ENCODE measurements at regions of chr3 and their contacts with region 1.

Region 1: GRCh38 chr3:17006132-17006852 is 121.5 kb downstream of the PLCL2 start:
- DNase-seq: no peak
- ATAC-seq: no peak
- H3K4me3 ChIP-seq: no peak overlapping the region
- H3K27ac ChIP-seq: no peak overlapping the region
- H3K4me1 ChIP-seq: no peaks in the 10 kb centered on the region
- H3K27me3 ChIP-seq: no peaks in the 10 kb centered on the region
- CTCF ChIP-seq: no peak
- POLR2A ChIP-seq: no peak
- RAD21 ChIP-seq: no peak

Region 2: GRCh38 chr3:16741103-16741758 is 265.1 kb before region 1 on chr3:
- CTCF ChIA-PET with region 1: no interaction called
- POLR2A ChIA-PET with region 1: no interaction called
- dilution Hi-C with region 1: no loop called
- in situ Hi-C with region 1: no loop called
- intact Hi-C with region 1: no loop called
- DNase-seq: peak; percentile 60
- ATAC-seq: no peak
- H3K4me3 ChIP-seq: no peak overlapping the region
- H3K27ac ChIP-seq: no peak overlapping the region
- H3K4me1 ChIP-seq: no peaks in the 10 kb centered on the region
- H3K27me3 ChIP-seq: no peaks in the 10 kb centered on the region
- CTCF ChIP-seq: no peak
- POLR2A ChIP-seq: no peak
- RAD21 ChIP-seq: no peak

Region 3: DNA sequence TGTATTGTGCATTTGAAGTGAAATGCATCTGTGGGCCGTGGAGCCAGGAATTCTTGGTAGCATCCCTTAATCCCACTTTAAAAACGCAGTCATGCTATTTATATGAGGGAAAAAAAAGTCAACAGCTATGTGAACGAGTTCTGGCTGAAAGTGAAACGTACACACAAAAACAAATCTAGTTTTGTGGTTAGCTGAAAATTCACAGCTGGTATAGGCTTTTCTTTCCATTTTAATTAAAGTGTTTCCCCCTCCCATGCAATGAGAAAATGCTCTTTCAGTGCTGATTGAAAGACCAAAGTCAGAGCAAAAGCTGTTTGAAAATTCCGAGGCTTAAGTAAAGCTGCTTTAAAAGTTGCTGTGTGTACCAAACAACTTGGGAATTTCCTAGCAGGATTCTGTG is 175.9 kb after region 1 on chr3:
- CTCF ChIA-PET with region 1: no interaction called
- POLR2A ChIA-PET with region 1: interaction called, 10 read pairs
- dilution Hi-C with region 1: no loop called
- in situ Hi-C with region 1: no loop called
- intact Hi-C with region 1: no loop called
- DNase-seq: no peak
- ATAC-seq: no peak
- H3K4me3 ChIP-seq: no peak overlapping the region
- H3K27ac ChIP-seq: no peak overlapping the region
- H3K4me1 ChIP-seq: no peaks in the 10 kb centered on the region; the same call in 1 of the 2 replicates
- H3K27me3 ChIP-seq: no peaks in the 10 kb centered on the region
- CTCF ChIP-seq: no peak
- POLR2A ChIP-seq: no peak
- RAD21 ChIP-seq: no peak

Measured in IMR-90 (cell line).